Prostate gland (tissue), 2 donors: ENCODE measurements at regions of chr15 and their contacts with region 1.

Region 1: DNA sequence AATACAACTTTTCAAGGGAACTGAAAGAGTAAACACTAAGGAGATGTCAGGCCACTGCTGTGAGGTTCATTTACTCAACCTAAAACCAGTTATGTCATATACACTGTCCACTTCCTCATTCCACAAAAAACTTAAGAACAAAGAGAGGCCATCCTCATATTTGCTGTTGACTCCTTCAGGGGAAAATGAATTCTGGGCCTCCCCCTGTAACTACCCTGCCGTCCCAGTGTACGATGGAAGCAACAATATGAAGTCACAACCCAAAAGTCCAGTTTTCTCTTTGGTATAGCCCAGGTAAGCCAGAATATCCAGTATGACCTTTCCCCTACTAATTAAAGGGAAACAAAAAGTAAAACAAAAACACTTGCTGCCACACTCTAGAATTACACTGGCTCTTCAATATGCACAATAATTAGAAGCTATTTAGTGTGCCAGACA is 16.2 kb downstream of the CEP152 start:
- DNase-seq: no peak
- H3K4me3 ChIP-seq: no peak overlapping the region
- H3K27ac ChIP-seq: no peak overlapping the region
- H3K4me1 ChIP-seq: no peaks in the 10 kb centered on the region
- H3K27me3 ChIP-seq: no peaks in the 10 kb centered on the region
- CTCF ChIP-seq: no peak
- POLR2A ChIP-seq: no peak

Region 2: DNA sequence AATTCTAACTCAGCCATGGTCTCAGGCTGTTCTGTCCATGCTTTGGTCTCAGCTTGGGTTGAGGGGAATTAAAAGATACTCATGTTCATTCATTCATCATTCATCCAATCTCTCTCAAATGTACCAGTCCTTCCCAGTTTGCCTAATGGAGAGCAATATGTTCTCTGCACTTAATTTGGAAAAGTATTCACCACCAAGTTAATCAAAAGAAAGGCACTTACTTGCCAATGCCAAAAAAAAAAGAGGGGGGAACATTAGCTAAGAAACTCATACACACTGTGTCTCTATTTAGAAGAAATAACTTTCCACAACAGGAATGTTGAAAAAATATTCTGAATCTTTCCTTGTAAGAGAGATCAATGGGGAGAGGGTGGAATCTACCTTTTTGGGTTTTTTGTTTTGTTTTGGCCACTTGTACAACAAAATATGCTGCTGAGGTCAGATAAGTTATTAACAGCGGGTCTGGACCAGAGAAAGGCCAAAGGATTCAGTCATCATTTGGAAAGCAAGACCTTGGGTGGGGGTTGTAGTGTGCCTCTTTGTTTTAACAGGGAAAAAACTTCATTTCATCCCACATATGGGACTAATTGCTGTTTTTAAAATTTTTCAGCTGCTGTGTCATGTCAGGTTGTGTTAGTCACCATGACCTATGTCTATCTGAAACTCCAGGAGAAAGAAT is 301.5 kb before region 1 on chr15:
- intact Hi-C with region 1: no loop called
- DNase-seq: no peak
- H3K4me3 ChIP-seq: no peak overlapping the region
- H3K27ac ChIP-seq: peak overlapping the region; percentile 25 to 41
- H3K4me1 ChIP-seq: no peaks in the 10 kb centered on the region
- H3K27me3 ChIP-seq: no peaks in the 10 kb centered on the region
- CTCF ChIP-seq: no peak
- POLR2A ChIP-seq: no peak

Region 3: DNA sequence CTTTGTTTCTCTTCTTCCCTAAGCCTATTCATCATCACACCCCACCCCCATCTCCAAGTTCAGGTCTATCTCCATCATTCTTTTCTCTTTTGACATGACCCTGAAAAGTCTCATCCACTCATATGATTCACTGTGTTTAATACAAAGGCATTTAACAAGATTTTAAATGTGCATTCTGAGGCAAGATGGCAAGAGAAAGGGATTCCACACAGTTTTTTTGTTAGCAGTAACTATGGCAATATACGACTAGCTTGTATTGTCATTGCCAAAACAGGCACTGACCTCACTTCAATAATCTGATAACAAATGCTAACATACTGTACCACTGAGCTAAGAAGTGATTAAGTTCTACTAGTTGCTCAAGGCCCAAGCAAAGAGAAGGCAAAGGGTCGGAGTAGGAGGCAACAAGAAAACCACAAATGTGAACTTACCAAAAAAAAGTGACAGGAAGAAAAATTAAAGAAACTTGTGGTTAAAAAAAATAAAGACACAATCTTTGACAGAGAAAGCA is 202.4 kb before region 1 on chr15:
- intact Hi-C with region 1: no loop called
- DNase-seq: no peak
- H3K4me3 ChIP-seq: no peak overlapping the region
- H3K27ac ChIP-seq: no peak overlapping the region
- H3K4me1 ChIP-seq: no peaks in the 10 kb centered on the region
- H3K27me3 ChIP-seq: no peaks in the 10 kb centered on the region
- CTCF ChIP-seq: no peak
- POLR2A ChIP-seq: no peak

Region 4: DNA sequence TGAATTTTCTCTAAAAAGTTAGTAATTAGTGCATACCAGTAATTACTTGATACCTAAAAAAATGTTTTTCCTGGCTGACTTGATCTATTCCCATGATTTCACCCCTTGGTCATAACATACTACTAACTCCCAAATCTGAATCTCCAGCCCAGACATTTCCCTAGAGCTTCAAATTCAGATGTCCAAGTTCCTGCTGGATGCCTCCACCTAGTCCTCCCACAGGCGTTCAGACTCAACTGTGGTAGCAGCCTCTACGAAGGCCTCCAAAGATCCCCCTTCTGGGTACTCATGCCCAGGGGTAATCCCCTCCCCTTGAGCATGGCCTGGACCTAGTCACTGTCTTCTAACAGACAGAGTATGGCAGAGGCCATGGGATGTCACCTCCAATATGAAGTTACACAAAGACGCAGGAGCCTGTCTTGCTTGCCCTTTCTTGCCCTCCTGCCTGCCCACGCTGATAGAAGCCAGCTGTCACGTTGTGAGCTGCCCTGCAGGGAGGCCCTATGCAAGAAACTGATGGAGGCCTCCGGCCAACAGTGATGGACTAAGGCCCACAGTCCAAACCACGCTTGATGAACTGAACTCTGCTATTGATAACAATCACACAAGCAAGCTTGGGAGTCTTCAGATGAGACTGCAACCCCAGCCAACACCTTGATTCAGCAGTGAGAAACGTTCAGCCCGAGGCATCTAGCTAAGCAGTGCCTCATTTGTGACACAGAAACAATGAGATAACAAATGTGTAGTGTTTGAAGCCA is 140.6 kb before region 1 on chr15:
- intact Hi-C with region 1: loop called (anchors 5 kb)
- DNase-seq: no peak
- H3K4me3 ChIP-seq: no peak overlapping the region
- H3K27ac ChIP-seq: no peak overlapping the region
- H3K4me1 ChIP-seq: no peaks in the 10 kb centered on the region
- H3K27me3 ChIP-seq: no peaks in the 10 kb centered on the region
- CTCF ChIP-seq: no peak
- POLR2A ChIP-seq: no peak

Region 5: GRCh38 chr15:48868536-48868935 is 73.8 kb after region 1 on chr15:
- intact Hi-C with region 1: no loop called
- DNase-seq: no peak
- H3K4me3 ChIP-seq: no peak overlapping the region
- H3K27ac ChIP-seq: no peak overlapping the region
- H3K4me1 ChIP-seq: no peaks in the 10 kb centered on the region
- H3K27me3 ChIP-seq: no peaks in the 10 kb centered on the region
- CTCF ChIP-seq: no peak
- POLR2A ChIP-seq: no peak

Region 6: GRCh38 chr15:49406352-49407118 is 611.8 kb after region 1 on chr15:
- intact Hi-C with region 1: no loop called
- DNase-seq: no peak
- H3K4me3 ChIP-seq: no peak overlapping the region
- H3K27ac ChIP-seq: no peak overlapping the region
- H3K4me1 ChIP-seq: no peaks in the 10 kb centered on the region
- H3K27me3 ChIP-seq: no peaks in the 10 kb centered on the region
- CTCF ChIP-seq: no peak
- POLR2A ChIP-seq: no peak